Upper lobe of right lung (tissue), 1 donor: ENCODE measurements at regions of chr4 and their contacts with region 1.

Region 1: DNA sequence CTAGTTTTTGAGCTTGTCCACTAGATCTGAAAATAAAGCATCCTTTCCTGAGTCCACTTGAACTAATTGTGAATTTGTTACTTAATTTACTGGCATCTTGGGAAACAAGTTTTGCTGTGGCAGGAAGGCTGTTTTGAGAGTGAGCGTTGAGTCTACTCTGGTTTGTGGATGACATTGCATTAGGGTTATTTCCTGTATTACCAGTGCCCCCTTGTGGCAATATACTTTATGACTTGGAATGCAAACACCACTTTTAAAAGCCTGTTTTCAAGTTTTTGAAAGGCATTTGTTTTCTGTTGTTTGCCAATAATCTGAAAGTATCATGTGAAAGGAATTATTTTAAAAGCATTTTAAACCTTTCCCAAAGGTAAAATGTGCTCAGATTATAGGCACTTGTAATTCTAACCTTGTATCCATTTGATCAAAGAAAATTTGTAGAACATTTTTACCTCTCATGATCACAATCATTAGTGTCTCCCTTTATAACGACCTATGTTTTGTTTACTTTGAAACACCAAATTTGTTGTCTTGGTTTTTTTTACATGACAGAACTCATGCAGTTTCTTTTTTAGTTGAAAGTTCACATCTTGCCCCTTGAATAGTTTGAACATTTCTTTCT is 18.0 kb upstream of the CYP2U1 start:
- DNase-seq: no peak
- ATAC-seq: peak; percentile 98
- H3K4me3 ChIP-seq: no peak overlapping the region
- H3K27ac ChIP-seq: no peak overlapping the region
- H3K4me1 ChIP-seq: no peaks in the 10 kb centered on the region
- H3K27me3 ChIP-seq: no peaks in the 10 kb centered on the region
- CTCF ChIP-seq: peak; percentile 83

Region 2: GRCh38 chr4:107757864-107758476 is 155.4 kb before region 1 on chr4:
- intact Hi-C with region 1: loop called (anchors 5 kb)
- DNase-seq: no peak
- ATAC-seq: peak; percentile 70
- H3K4me3 ChIP-seq: no peak overlapping the region
- H3K27ac ChIP-seq: no peak overlapping the region
- H3K4me1 ChIP-seq: peaks cover 3% of the 10 kb centered on the region
- H3K27me3 ChIP-seq: no peaks in the 10 kb centered on the region
- CTCF ChIP-seq: peak; percentile 67

Region 3: DNA sequence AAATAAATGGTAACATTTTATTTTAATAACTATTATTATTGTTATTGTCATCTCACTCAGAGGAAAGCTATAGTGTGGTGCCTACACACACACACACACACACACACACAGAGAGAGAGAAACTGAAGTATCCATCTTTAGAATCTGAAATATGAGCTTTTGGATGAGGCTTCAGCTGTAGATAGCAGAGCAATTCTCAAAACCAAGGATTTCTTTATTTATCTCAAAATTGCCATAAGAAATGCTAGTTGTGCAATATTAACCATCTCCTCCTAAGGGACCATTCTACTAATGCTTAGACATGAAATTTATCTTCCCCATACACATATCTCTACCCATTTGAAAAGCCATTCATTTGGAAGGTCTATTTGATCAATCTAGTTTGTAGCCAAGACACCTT is 138.7 kb before region 1 on chr4:
- intact Hi-C with region 1: no loop called
- DNase-seq: no peak
- ATAC-seq: no peak
- H3K4me3 ChIP-seq: no peak overlapping the region
- H3K27ac ChIP-seq: no peak overlapping the region
- H3K4me1 ChIP-seq: no peaks in the 10 kb centered on the region
- H3K27me3 ChIP-seq: no peaks in the 10 kb centered on the region
- CTCF ChIP-seq: no peak

Region 4: DNA sequence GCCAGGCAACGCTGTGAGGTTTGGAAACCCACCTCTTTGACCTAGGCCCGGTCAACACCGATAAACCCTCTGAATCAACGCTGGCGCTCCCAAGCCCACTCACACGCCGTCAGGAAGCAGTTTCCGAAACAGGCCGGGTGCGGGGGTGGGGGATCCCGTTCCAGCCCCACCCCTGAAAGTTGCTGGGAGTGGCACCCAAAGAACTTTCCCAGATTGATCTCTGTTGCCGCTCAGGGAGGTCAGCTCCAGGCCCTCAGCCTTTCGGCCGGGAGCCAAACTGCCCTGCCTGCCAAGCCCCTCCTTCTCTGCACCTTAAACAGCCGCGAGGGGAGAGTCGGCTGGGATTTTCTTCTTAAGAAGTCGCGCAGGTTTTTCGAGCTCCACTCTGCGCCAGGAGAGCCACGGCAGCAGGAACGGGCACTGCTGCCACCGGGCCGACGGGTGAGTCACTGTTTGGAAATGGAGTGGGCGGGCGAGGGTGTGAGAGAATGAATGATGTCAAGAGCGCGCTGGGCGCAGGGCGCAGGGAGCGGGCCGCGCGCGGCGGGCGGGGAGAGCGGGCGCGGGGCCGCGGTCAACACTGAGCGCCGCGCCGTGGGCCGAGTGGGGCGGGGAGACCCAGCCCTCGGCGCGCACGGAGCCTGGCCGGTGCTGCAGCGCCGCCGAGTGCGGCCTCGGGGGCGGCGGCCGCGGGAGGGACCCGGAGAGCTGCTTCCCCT is 88.9 kb before region 1 on chr4 and contains the start of gene SGMS2:
- intact Hi-C with region 1: loop called (anchors 10 kb)
- DNase-seq: peak; percentile 95
- ATAC-seq: peak; percentile 91
- H3K4me3 ChIP-seq: peak within 1 kb of the TSS; percentile 80
- H3K27ac ChIP-seq: peak within 1 kb of the TSS; percentile 94
- H3K4me1 ChIP-seq: peaks cover 18% of the 10 kb centered on the region
- H3K27me3 ChIP-seq: no peaks in the 10 kb centered on the region
- CTCF ChIP-seq: peak; percentile 14
- total RNA-seq, gene SGMS2: 67.8 TPM

Region 5: DNA sequence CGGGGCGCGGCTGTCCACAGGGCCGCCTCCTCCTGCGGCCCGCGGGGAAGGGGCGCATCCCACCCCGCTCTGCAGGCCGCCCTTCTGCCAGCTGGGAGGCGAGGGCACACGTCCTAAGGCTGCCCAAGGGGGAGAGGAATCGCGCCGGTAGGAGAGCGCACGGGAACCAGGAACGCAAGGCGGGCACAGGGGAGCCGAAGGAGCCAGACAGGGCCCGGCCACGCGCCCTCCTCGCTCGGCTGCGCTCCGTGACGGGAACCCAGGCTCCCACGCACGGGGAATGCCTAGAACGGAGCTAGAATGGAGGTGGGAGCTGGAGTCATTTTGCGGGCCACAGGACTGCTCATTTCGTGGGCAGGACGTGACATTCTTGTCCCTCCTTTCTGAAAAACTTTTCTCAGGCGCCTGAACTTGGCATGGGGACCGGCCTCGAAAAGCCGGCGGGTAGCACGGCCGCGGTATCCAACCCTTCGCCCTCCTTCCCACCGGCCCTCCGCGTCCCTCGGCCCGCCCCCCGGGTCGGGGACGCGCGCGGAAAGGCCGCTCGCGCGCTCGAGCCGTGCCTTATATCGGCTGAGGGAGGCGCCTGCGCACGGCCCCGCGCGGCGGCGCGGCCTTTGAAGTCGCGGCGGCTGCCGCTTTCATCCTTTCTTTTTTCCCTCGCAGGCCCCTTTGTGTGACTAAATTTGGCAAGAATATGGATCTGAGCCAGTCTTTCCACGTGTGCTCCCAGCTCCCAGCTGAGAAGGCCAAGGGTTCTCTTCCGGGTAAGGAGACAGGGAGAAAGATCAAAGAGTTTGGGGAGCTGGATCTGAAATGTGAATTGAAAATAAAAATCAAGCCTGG is 259.6 kb after region 1 on chr4:
- intact Hi-C with region 1: no loop called
- DNase-seq: peak; percentile 73
- ATAC-seq: peak; percentile 79
- H3K4me3 ChIP-seq: peak overlapping the region; percentile 68
- H3K27ac ChIP-seq: peak overlapping the region; percentile 79
- H3K4me1 ChIP-seq: peaks cover 12% of the 10 kb centered on the region
- H3K27me3 ChIP-seq: peaks cover 50% of the 10 kb centered on the region
- CTCF ChIP-seq: no peak